ENCODE measurements at regions of chr6 and their contacts with region 1.

Region 1: GRCh38 chr6:155174576-155175211 is 89.1 kb upstream of the CLDN20 start:
- DNase-seq: peak; percentile 67 to 81 (median 73)
- H3K4me3 ChIP-seq: no peak overlapping the region
- H3K4me3 Mint-ChIP-seq: peak overlapping the region in 3 of 8 donors; percentile 3 to 26 (median 4)
- H3K27ac ChIP-seq: no peak overlapping the region
- H3K27ac Mint-ChIP-seq: peak overlapping the region; percentile 5 to 83 (median 62)
- H3K4me1 ChIP-seq: peaks cover 21% of the 10 kb centered on the region
- H3K4me1 Mint-ChIP-seq: peaks cover 21 to 41% (median 26%) of the 10 kb centered on the region in 4 donors
- H3K27me3 ChIP-seq: no peaks in the 10 kb centered on the region
- H3K27me3 Mint-ChIP-seq: no peaks in the 10 kb centered on the region

Region 2: GRCh38 chr6:154675602-154676088 is 499.0 kb before region 1 on chr6:
- CTCF ChIA-PET with region 1: interaction called, 39 read pairs
- POLR2A ChIA-PET with region 1: interaction called, 3 read pairs
- intact Hi-C with region 1: no loop called
- DNase-seq: peak; percentile 85 to 90 (median 87)
- H3K4me3 ChIP-seq: no peak overlapping the region
- H3K4me3 Mint-ChIP-seq: no peak overlapping the region
- H3K27ac ChIP-seq: no peak overlapping the region
- H3K27ac Mint-ChIP-seq: no peak overlapping the region
- H3K4me1 ChIP-seq: no peaks in the 10 kb centered on the region
- H3K4me1 Mint-ChIP-seq: no peaks in the 10 kb centered on the region
- H3K27me3 ChIP-seq: no peaks in the 10 kb centered on the region
- H3K27me3 Mint-ChIP-seq: no peaks in the 10 kb centered on the region

Region 3: GRCh38 chr6:154868143-154868594 is 306.5 kb before region 1 on chr6:
- CTCF ChIA-PET with region 1: interaction called, 18 read pairs
- POLR2A ChIA-PET with region 1: no interaction called
- intact Hi-C with region 1: no loop called
- DNase-seq: peak in 4 of 5 donors; percentile 2 to 14 (median 10)
- H3K4me3 ChIP-seq: no peak overlapping the region
- H3K4me3 Mint-ChIP-seq: no peak overlapping the region
- H3K27ac ChIP-seq: no peak overlapping the region
- H3K27ac Mint-ChIP-seq: no peak overlapping the region
- H3K4me1 ChIP-seq: no peaks in the 10 kb centered on the region
- H3K4me1 Mint-ChIP-seq: peaks cover 0 to 8% (median 5%) of the 10 kb centered on the region in 4 donors
- H3K27me3 ChIP-seq: no peaks in the 10 kb centered on the region
- H3K27me3 Mint-ChIP-seq: no peaks in the 10 kb centered on the region

Region 4: DNA sequence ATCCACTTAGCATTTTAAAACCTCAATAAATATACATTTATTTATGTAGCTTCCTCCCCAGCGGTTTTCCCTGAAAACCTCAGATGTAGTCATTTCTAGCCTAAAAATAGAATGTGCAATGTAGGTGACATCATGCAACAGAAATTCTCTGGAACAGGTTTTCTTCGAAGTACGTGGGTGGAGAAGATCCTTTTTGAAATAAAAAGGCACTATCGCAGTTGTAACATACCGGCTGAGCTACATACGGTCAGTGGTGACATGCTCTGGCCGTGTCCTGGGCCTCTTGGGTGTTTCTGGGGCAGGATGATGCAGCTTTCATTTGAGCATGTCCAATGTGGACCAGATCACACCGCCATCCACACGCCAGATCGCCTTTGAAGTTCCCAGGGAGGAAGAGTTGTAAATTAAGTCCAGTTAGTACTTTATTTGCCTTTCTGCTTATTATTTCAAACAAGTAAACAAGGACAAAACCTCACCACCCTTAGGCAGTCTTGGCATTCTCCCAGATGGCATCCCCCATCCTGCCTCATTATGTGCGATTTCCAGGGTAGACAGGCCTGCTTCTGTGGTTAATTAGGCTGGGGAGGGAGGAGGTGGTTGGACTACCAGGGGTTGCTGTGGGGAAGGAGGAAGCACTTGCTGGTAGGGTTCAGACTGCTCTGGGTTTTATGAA is 20.4 kb before region 1 on chr6:
- CTCF ChIA-PET with region 1: interaction called, 12 read pairs
- POLR2A ChIA-PET with region 1: interaction called, 4 read pairs
- intact Hi-C with region 1: no loop called
- DNase-seq: no peak
- H3K4me3 ChIP-seq: no peak overlapping the region
- H3K4me3 Mint-ChIP-seq: peak overlapping the region in 6 of 8 donors; percentile 33 to 68 (median 52)
- H3K27ac ChIP-seq: no peak overlapping the region
- H3K27ac Mint-ChIP-seq: peak overlapping the region in 5 of 7 donors; percentile 24 to 81 (median 42)
- H3K4me1 ChIP-seq: peaks cover 20% of the 10 kb centered on the region
- H3K4me1 Mint-ChIP-seq: peaks cover 23 to 46% (median 29%) of the 10 kb centered on the region in 4 donors
- H3K27me3 ChIP-seq: no peaks in the 10 kb centered on the region
- H3K27me3 Mint-ChIP-seq: peaks cover 0 to 1% of the 10 kb centered on the region in 2 donors

Region 5: GRCh38 chr6:155201461-155202226 is 26.9 kb after region 1 on chr6:
- CTCF ChIA-PET with region 1: no interaction called
- POLR2A ChIA-PET with region 1: no interaction called
- intact Hi-C with region 1: no loop called
- DNase-seq: no peak
- H3K4me3 ChIP-seq: no peak overlapping the region
- H3K4me3 Mint-ChIP-seq: no peak overlapping the region
- H3K27ac ChIP-seq: no peak overlapping the region
- H3K27ac Mint-ChIP-seq: no peak overlapping the region
- H3K4me1 ChIP-seq: no peaks in the 10 kb centered on the region
- H3K4me1 Mint-ChIP-seq: no peaks in the 10 kb centered on the region
- H3K27me3 ChIP-seq: no peaks in the 10 kb centered on the region
- H3K27me3 Mint-ChIP-seq: no peaks in the 10 kb centered on the region

Region 6: GRCh38 chr6:155248008-155249001 is 73.6 kb after region 1 on chr6:
- CTCF ChIA-PET with region 1: interaction called, 46 read pairs
- POLR2A ChIA-PET with region 1: interaction called, 5 read pairs
- intact Hi-C with region 1: loop called (anchors 1 kb)
- DNase-seq: peak in 2 of 5 donors; percentile 2 to 3
- H3K4me3 ChIP-seq: no peak overlapping the region
- H3K4me3 Mint-ChIP-seq: no peak overlapping the region
- H3K27ac ChIP-seq: no peak overlapping the region
- H3K27ac Mint-ChIP-seq: peak overlapping the region in 3 of 7 donors; percentile 18 to 58 (median 42)
- H3K4me1 ChIP-seq: no peaks in the 10 kb centered on the region
- H3K4me1 Mint-ChIP-seq: peaks cover 0 to 3% (median 0%) of the 10 kb centered on the region in 4 donors
- H3K27me3 ChIP-seq: no peaks in the 10 kb centered on the region
- H3K27me3 Mint-ChIP-seq: no peaks in the 10 kb centered on the region

Region 7: GRCh38 chr6:155380666-155381332 is 206.1 kb after region 1 on chr6:
- CTCF ChIA-PET with region 1: no interaction called
- POLR2A ChIA-PET with region 1: no interaction called
- intact Hi-C with region 1: no loop called
- DNase-seq: no peak
- H3K4me3 ChIP-seq: no peak overlapping the region
- H3K4me3 Mint-ChIP-seq: no peak overlapping the region
- H3K27ac ChIP-seq: no peak overlapping the region
- H3K27ac Mint-ChIP-seq: no peak overlapping the region
- H3K4me1 ChIP-seq: no peaks in the 10 kb centered on the region
- H3K4me1 Mint-ChIP-seq: no peaks in the 10 kb centered on the region
- H3K27me3 ChIP-seq: no peaks in the 10 kb centered on the region
- H3K27me3 Mint-ChIP-seq: no peaks in the 10 kb centered on the region

Region 8: DNA sequence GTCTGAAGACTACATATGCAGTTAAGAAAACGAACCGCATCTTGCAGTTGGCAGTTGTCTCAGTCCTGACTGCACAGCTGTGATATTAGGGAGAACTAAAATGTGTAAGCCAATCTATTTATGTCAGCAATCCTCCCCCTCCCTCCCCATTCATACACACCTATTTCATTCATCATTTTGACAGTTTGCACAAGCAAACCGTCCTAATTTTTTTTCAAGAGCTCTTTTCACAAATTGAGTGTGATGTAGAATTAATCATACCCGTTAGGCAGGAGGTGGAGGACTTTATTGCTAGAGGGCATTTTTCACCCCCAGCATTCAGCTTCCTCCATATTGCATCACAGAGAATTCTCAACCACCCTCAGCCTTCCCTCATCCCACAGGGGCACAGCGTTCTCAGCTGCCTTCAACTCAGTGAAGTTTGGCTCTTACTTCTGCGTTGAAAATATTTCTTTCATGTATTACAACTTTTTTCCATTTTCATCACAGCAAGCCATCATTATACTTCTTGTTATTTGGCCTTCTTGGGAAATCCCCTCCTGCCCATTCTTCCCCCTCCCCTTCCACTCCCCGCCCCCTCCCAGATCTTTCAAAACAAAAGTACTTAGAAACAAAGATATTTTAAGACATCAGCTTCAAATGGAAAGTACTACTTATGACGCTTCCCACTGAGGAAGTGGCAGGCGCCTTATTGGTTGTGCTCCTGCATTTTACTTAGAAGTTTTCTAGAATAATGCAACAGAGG is 243.5 kb after region 1 on chr6:
- CTCF ChIA-PET with region 1: no interaction called
- POLR2A ChIA-PET with region 1: no interaction called
- intact Hi-C with region 1: loop called (anchors 10 kb)
- DNase-seq: peak; percentile 56 to 86 (median 72)
- H3K4me3 ChIP-seq: peak overlapping the region in 1 of 2 donors; percentile 49
- H3K4me3 Mint-ChIP-seq: peak overlapping the region; percentile 82 to 94 (median 88)
- H3K27ac ChIP-seq: peak overlapping the region; percentile 69
- H3K27ac Mint-ChIP-seq: peak overlapping the region; percentile 93 to 99 (median 98)
- H3K4me1 ChIP-seq: peaks cover 34% of the 10 kb centered on the region
- H3K4me1 Mint-ChIP-seq: peaks cover 32 to 46% (median 39%) of the 10 kb centered on the region in 4 donors
- H3K27me3 ChIP-seq: no peaks in the 10 kb centered on the region
- H3K27me3 Mint-ChIP-seq: no peaks in the 10 kb centered on the region

Region 9: DNA sequence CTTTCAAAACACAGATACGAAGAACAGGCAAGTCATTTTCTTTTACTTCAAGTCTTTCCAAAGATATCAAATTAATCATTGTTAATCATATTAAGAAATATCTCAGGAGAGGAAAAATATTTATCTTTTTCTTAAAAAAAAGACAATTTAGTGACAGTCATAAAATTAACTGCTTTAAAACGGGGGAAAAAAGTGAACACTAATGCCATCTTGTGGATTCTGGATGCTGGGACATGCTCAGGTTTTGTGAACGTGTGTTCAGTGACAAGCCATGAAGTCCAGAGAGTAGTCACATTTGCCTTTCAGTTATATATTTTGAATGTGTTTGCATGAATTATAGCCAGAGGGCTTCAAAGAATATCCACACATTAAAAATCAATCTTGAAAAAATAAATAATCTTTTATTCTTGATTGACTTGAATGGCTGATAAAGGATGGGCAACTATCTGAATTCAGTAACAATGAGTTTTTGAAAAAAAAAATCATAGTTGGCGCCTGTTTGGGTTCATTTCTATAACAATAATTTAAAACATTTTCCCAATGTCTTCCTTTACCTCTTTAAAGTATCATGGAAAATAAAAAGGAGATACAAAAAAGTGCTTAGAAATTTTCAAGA is 355.6 kb after region 1 on chr6:
- CTCF ChIA-PET with region 1: no interaction called
- POLR2A ChIA-PET with region 1: no interaction called
- intact Hi-C with region 1: no loop called
- DNase-seq: peak in 3 of 5 donors; percentile 3 to 15 (median 10)
- H3K4me3 ChIP-seq: no peak overlapping the region
- H3K4me3 Mint-ChIP-seq: no peak overlapping the region
- H3K27ac ChIP-seq: no peak overlapping the region
- H3K27ac Mint-ChIP-seq: no peak overlapping the region
- H3K4me1 ChIP-seq: no peaks in the 10 kb centered on the region
- H3K4me1 Mint-ChIP-seq: peaks cover 0 to 2% (median 0%) of the 10 kb centered on the region in 4 donors
- H3K27me3 ChIP-seq: no peaks in the 10 kb centered on the region
- H3K27me3 Mint-ChIP-seq: peaks cover under 1 to 5% of the 10 kb centered on the region in 2 donors